T-cell (primary cell): ENCODE measurements at regions of chr3 and their contacts with region 1.

Region 1: DNA sequence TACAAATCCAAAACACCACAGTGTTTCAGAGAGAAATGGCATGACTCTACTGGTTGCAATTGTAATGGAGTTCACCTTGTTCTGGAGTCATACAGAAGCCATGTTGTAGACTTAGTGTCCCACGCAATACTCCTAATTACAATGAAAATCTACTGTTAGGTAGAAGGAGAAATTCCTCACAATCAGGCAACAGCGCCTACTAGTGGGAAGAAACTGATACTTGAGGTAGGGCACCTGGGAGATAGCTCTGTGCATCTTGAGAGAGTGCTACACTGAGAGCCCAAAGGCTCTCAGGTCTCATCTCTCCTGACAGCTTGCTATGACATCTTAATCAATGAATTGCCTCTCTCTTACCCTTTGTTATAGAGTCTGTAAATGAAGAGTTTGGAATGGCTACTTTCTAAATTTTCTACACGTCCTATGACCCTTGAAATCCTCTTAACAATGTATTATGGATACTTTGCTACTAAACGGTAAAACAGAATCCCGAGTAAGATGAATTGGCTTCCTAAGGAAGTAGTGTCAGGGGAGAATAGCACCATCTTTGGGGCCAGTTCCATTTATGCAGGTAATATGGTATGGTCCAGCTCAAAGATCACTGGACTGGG is 422.7 kb upstream of the TPRG1 start:
- DNase-seq: peak in 33 of 35 experiments; percentile 8 to 81 (median 42)
- ATAC-seq: peak; percentile 73 to 76 (median 74)
- H3K4me3 ChIP-seq: no peak overlapping the region
- H3K4me3 Mint-ChIP-seq: no peak overlapping the region
- H3K27ac ChIP-seq: no peak overlapping the region
- H3K27ac Mint-ChIP-seq: no peak overlapping the region
- H3K4me1 ChIP-seq: no peaks in the 10 kb centered on the region
- H3K4me1 Mint-ChIP-seq: peaks cover 0 to 10% (median 0%) of the 10 kb centered on the region in 3 donors
- H3K27me3 ChIP-seq: no peaks in the 10 kb centered on the region
- H3K27me3 Mint-ChIP-seq: no peaks in the 10 kb centered on the region

Region 2: DNA sequence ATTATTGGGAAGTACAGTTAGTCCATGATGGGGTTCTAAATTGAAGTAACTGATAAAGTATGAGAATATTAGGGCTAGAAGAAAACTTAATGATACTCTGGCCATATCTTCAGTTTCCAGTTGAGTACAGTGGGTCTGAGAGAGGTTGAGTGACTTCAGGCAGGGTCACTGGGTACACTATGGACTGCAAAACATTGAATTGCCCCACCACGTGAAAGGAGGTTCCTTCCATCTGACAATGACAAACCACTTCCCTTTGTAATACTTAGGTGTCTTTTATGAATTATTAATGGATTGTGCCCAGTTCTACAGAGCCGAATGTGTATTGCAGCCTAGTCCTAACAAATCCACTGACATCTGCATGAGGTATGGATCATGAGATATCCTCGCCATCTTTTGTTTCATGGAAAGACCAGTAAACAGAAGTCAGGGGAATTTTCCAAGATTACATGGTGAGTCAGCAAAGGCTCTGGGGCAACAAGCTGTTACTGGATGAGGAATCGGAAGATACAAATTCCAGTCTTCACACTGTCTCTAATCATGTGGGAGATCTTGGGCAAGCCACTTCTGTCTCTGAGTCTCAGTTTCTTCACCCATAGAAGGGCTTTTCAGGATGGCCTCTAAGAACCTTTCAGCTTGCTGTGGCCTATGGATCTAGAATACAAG is 937.4 kb before region 1 on chr3:
- CTCF ChIA-PET with region 1: no interaction called
- POLR2A ChIA-PET with region 1: interaction called in 1 of 2 experiments, 12 read pairs
- DNase-seq: no peak
- ATAC-seq: no peak
- H3K4me3 ChIP-seq: no peak overlapping the region
- H3K4me3 Mint-ChIP-seq: no peak overlapping the region
- H3K27ac ChIP-seq: no peak overlapping the region
- H3K27ac Mint-ChIP-seq: no peak overlapping the region
- H3K4me1 ChIP-seq: no peaks in the 10 kb centered on the region
- H3K4me1 Mint-ChIP-seq: peaks cover 0 to 6% (median 3%) of the 10 kb centered on the region in 3 donors
- H3K27me3 ChIP-seq: no peaks in the 10 kb centered on the region
- H3K27me3 Mint-ChIP-seq: no peaks in the 10 kb centered on the region